Heart left ventricle (tissue), 16 donors: ENCODE measurements at regions of chr2 and their contacts with region 1.

Region 1: GRCh38 chr2:71505086-71505769 is 51.9 kb downstream of the DYSF start:
- DNase-seq: peak in 3 of 5 donors; percentile 51 to 59 (median 51)
- ATAC-seq: peak in 3 of 4 donors; percentile 7 to 25 (median 20)
- H3K4me3 ChIP-seq: no peak overlapping the region
- H3K27ac ChIP-seq: peak overlapping the region in 11 of 12 donors; percentile 78 to 94 (median 87)
- H3K4me1 ChIP-seq: peaks cover 33 to 69% (median 53%) of the 10 kb centered on the region in 12 donors
- H3K27me3 ChIP-seq: no peaks in the 10 kb centered on the region
- CTCF ChIP-seq: no peak
- POLR2A ChIP-seq: no peak

Region 2: GRCh38 chr2:71157124-71157793 is 348.0 kb before region 1 on chr2:
- intact Hi-C with region 1: loop called in 4 of 10 experiments (anchors 5 to 10 kb)
- DNase-seq: peak; percentile 27 to 63 (median 49)
- ATAC-seq: peak; percentile 61 to 79 (median 75)
- H3K4me3 ChIP-seq: peak overlapping the region in 4 of 12 donors; percentile 11 to 24 (median 14)
- H3K27ac ChIP-seq: peak overlapping the region in 1 of 12 donors; percentile 58
- H3K4me1 ChIP-seq: peaks cover 0 to 10% (median 5%) of the 10 kb centered on the region in 12 donors
- H3K27me3 ChIP-seq: no peaks in the 10 kb centered on the region
- CTCF ChIP-seq: peak; percentile 46 to 72 (median 58)
- POLR2A ChIP-seq: no peak

Region 3: DNA sequence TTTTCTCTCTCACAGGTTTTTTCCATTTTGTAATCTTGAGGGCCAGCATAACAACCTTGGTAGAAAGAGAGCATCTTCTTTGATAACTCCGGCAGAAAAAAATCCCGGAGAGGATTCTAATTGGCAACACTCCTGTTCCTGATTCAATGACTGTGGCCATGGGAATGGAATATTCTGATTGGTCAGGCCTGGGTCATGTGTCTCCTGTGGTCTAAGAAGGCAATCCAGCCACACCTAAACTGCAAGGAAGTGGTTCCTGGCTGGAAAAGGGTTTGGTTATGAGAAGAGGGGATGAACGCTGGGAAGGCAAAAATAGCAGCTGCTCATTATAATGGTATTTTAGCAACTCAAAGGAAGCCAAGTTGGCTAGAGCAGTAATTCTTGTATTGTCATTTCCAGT is 198.5 kb before region 1 on chr2:
- intact Hi-C with region 1: loop called in 5 of 10 experiments (anchors 2 to 5 kb)
- DNase-seq: peak in 1 of 5 donors; percentile 34
- ATAC-seq: peak in 3 of 4 donors; percentile 81 to 91 (median 85)
- H3K4me3 ChIP-seq: no peak overlapping the region
- H3K27ac ChIP-seq: peak overlapping the region in 5 of 12 donors; percentile 18 to 44 (median 32)
- H3K4me1 ChIP-seq: peaks cover 0 to 18% (median 4%) of the 10 kb centered on the region in 12 donors
- H3K27me3 ChIP-seq: no peaks in the 10 kb centered on the region
- CTCF ChIP-seq: no peak
- POLR2A ChIP-seq: no peak

Region 4: DNA sequence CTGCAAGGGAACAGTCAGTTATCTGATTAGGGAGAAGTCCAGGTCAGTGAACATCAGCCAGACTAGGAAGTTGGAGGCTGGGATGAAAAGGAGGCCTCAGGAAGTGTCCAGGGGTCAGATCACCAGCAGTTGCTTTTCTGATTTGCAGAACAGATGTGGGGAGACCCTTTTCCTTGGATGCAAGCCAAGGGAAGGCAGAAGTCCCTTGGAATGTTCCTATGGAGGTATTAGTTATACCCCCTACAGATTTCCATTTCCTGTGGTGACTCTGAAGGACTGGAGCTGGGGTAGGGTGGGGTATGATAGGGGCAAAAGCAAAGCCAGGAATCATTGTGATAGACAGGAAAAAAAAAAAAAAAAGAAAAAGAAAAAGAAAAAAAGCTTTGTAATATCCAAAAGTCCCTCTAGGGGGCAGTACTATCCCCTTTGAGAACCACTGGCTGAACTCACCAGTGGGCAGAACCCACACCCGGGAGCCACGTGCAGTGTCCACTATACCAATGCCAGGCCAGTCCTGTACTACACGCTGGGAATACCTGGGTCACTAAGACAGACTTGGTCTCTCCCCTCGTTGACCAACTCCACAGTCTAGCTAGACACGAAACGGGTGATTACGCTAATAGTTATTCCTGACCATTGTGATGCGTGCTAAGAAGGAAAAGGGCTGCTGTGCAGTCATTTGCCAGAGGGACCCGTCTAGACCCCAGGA is 44.5 kb before region 1 on chr2:
- intact Hi-C with region 1: loop called (anchors 1 to 5 kb)
- DNase-seq: peak in 1 of 5 donors; percentile 47
- ATAC-seq: peak in 2 of 4 donors; percentile 19 to 31
- H3K4me3 ChIP-seq: no peak overlapping the region
- H3K27ac ChIP-seq: peak overlapping the region in 7 of 12 donors; percentile 5 to 92 (median 52)
- H3K4me1 ChIP-seq: peaks cover 0 to 84% (median 64%) of the 10 kb centered on the region in 12 donors
- H3K27me3 ChIP-seq: no peaks in the 10 kb centered on the region
- CTCF ChIP-seq: peak; percentile 48 to 81 (median 69)
- POLR2A ChIP-seq: no peak

Region 5: GRCh38 chr2:71466303-71467173 is 38.7 kb before region 1 on chr2:
- intact Hi-C with region 1: loop called (anchors 1 to 5 kb)
- DNase-seq: peak; percentile 66 to 79 (median 68)
- ATAC-seq: peak; percentile 35 to 75 (median 66)
- H3K4me3 ChIP-seq: peak overlapping the region; percentile 39 to 89 (median 75)
- H3K27ac ChIP-seq: peak overlapping the region; percentile 59 to 93 (median 84)
- H3K4me1 ChIP-seq: peaks cover 7 to 72% (median 46%) of the 10 kb centered on the region in 12 donors
- H3K27me3 ChIP-seq: no peaks in the 10 kb centered on the region
- CTCF ChIP-seq: no peak
- POLR2A ChIP-seq: peak in 1 of 2 donors; percentile 66

Region 6: GRCh38 chr2:71474744-71475397 is 30.4 kb before region 1 on chr2:
- intact Hi-C with region 1: loop called in 1 of 10 experiments (anchors 1 kb)
- DNase-seq: peak in 3 of 5 donors; percentile 55 to 61 (median 60)
- ATAC-seq: peak; percentile 23 to 79 (median 70)
- H3K4me3 ChIP-seq: no peak overlapping the region
- H3K27ac ChIP-seq: peak overlapping the region in 11 of 12 donors; percentile 31 to 89 (median 68)
- H3K4me1 ChIP-seq: peaks cover 3 to 56% (median 28%) of the 10 kb centered on the region in 12 donors
- H3K27me3 ChIP-seq: no peaks in the 10 kb centered on the region
- CTCF ChIP-seq: no peak
- POLR2A ChIP-seq: no peak